Activated T-helper 2 cell treated with anti-CD3 and anti-CD28 coated beads, Interferon-gamma antibody, Interleukin-2, Interleukin-4, amounts not matched to agents 10 μg/mL and 5 μg/mL and 100 μg/mL, durations not matched to agents 14 hours and 24 hours and 36 hours (primary cell): ENCODE measurements at regions of chr1 and their contacts with region 1.

Region 1: DNA sequence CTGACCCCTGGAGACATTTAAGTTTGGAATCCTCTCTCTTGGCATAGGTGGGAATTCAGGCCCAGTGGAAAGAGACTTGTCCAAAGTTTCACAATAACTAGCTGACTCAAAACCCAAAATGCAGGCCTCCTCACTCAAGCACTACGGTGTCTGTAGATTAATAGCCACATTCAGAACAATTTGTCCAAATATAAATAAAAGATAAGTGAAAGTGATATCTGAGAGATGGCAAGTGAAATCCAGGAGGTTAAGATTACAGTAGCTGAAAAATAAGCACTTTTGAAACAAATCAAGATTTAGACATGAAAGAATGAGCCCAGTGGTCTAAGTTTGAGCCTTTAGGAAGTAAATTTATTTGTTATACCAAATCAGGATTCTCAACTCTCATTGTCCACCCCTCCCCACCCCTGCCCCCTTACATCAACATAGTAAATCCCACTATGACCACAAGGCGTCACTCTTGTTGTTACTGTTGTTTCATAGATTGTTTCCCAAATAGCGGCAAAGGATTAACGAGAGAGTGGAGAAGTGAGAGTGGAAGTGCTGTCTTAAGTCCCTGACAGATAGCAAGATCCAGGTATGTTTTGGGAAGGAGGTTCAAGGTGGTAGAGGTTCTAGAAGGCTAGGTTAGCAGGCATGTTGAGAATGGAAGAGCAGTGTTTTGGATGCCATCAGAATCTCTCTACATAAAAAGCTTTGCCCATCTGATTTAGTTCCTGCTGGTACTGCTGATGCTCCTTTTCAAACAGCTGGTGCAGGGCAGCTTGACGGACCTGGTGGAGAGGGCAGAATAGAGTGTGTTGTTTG is 7.1 kb upstream of the TPM3 start:
- DNase-seq: no peak
- H3K4me3 Mint-ChIP-seq: no peak overlapping the region
- H3K27ac Mint-ChIP-seq: no peak overlapping the region
- H3K4me1 Mint-ChIP-seq: no peaks in the 10 kb centered on the region
- H3K27me3 Mint-ChIP-seq: peaks cover 5% of the 10 kb centered on the region

Region 2: DNA sequence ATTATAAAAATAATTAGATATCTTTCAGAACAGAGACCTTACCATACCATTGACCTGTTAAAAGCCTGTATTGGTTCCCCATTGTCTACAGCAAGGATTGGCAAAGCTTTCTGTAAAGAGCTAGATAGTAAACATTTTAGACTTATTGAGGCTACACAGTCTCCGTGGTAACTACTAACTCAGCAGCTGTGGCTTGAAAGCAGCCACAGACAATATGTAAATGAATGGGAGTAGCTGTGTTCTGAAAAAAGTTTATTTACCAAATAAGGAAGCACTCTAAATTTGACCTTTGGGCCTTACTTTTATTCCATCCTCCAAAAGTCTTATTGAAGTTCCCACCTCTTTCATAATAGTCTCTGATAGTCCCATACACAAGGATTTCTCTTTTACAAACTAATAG is 83.8 kb before region 1 on chr1:
- intact Hi-C with region 1: no loop called
- DNase-seq: no peak
- H3K4me3 Mint-ChIP-seq: no peak overlapping the region
- H3K27ac Mint-ChIP-seq: no peak overlapping the region
- H3K4me1 Mint-ChIP-seq: peaks cover 9% of the 10 kb centered on the region
- H3K27me3 Mint-ChIP-seq: peaks cover 9% of the 10 kb centered on the region

Region 3: DNA sequence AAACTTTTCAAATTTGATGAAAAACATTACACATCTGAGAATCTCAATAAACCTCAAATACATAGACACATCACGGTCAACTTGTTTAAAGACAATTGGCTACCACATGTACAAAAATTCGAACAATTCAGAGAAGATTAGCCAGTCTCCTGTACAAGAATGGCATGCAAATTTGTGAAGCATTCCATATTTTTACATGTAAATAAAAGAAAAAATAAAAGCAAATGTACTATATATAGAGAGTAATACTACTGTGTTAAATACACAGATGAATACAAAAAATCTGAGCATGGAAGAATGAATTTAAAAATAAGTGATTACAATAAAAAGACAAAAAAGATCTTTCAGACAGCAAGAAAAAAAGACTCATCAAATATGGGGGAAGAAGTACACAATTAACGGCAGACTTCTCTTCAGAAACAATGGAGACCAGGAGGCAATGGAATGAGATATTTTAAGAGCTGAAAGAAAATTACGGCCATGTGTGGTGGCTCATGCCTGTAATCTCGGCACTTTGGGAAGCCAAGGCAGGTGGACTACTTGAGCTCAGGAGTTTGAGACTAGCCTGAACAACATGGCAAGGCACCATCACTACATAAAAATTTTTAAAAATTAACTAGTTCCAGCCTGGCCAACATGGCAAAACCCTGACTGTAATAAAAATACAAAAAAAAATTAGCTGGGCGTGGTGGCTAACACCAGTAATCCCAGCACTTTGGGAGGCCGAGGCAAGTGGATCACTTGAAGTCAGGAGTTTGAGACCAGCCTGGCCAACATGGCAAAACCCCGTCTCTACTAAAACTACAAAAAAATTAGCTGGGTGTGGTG is 96.7 kb after region 1 on chr1:
- intact Hi-C with region 1: no loop called
- DNase-seq: no peak
- H3K4me3 Mint-ChIP-seq: no peak overlapping the region
- H3K27ac Mint-ChIP-seq: no peak overlapping the region
- H3K4me1 Mint-ChIP-seq: no peaks in the 10 kb centered on the region
- H3K27me3 Mint-ChIP-seq: peaks cover 7% of the 10 kb centered on the region

Region 4: DNA sequence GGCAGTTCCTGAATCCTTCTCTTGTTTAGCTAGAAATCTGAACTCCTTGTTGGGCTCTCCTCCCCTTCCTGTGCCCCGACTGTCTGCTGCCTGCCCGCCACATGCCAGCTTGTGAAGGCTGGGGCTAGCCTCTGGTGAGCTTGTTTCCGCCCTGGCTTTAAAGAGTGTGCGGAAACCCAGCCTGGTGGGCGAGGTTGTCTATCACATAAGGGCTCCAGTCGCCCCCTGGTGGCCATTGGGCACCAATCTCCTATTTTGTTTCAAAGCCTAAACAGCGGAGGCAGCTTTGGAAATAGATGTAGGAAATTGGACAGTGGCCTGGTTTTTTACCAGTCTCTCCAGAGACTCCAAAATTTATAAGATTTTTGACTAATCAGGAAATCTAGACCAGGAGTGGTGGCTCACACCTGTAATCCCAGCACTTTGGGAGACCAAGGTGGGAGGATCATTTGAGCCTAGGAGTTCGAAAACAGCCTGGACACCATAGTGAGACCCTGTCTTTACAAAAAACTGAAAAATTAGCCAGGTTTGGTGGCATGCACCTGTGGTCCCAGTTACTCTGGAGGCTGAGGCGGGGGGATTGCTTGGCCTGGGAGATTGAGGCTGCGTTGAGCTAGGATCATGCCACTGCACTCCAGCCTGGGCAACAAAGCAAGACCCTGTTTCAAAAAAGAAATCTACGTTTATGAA is 136.2 kb after region 1 on chr1:
- intact Hi-C with region 1: loop called (anchors 5 kb)
- DNase-seq: peak; percentile 79
- H3K4me3 Mint-ChIP-seq: no peak overlapping the region
- H3K27ac Mint-ChIP-seq: peak overlapping the region; percentile 76
- H3K4me1 Mint-ChIP-seq: peaks cover 49% of the 10 kb centered on the region
- H3K27me3 Mint-ChIP-seq: no peaks in the 10 kb centered on the region

Region 5: GRCh38 chr1:154386643-154387352 is 187.8 kb after region 1 on chr1:
- intact Hi-C with region 1: no loop called
- DNase-seq: peak; percentile 32
- H3K4me3 Mint-ChIP-seq: peak overlapping the region; percentile 57
- H3K27ac Mint-ChIP-seq: peak overlapping the region; percentile 91
- H3K4me1 Mint-ChIP-seq: peaks cover 22% of the 10 kb centered on the region
- H3K27me3 Mint-ChIP-seq: no peaks in the 10 kb centered on the region